CD14-positive monocyte (primary cell): ENCODE measurements at regions of chr18 and their contacts with region 1.

Region 1: DNA sequence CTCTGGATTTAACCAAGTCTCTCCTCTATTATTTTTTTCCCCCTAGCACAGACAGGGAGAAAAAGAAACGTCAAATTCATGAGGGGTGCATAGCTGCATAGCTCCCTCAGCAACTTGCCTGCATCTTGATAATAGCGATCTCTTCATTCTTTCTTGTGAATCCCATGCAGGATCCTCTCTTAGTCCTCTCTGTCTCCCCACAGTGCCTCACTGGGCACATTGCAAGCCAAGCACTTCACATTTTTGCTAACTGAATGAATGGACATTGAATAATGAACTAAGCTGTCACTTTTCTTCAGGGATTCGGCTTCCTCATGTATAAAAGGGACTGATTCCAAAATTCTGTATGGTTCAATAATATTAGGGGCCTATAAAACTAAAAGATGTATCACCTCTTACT is 2.9 kb upstream of the EPB41L3 start:
- DNase-seq: peak; percentile 43 to 58 (median 57)
- H3K4me3 ChIP-seq: no peak overlapping the region
- H3K4me3 Mint-ChIP-seq: peak overlapping the region in 1 of 2 donors; percentile 4
- H3K27ac ChIP-seq: no peak overlapping the region
- H3K27ac Mint-ChIP-seq: no peak overlapping the region
- H3K4me1 ChIP-seq: peaks cover 13 to 18% of the 10 kb centered on the region in 2 donors
- H3K4me1 Mint-ChIP-seq: peaks cover 21% of the 10 kb centered on the region
- H3K27me3 ChIP-seq: peaks cover 0 to 3% of the 10 kb centered on the region in 2 donors
- H3K27me3 Mint-ChIP-seq: peaks cover 13 to 28% (median 22%) of the 10 kb centered on the region in 3 donors
- CTCF ChIP-seq: peak; percentile 50

Region 2: GRCh38 chr18:5424903-5425664 is 121.6 kb before region 1 on chr18:
- intact Hi-C with region 1: loop called in 1 of 2 experiments (anchors 10 kb)
- DNase-seq: peak; percentile 24 to 62 (median 43)
- H3K4me3 ChIP-seq: no peak overlapping the region
- H3K4me3 Mint-ChIP-seq: no peak overlapping the region
- H3K27ac ChIP-seq: no peak overlapping the region
- H3K27ac Mint-ChIP-seq: no peak overlapping the region
- H3K4me1 ChIP-seq: no peaks in the 10 kb centered on the region
- H3K4me1 Mint-ChIP-seq: peaks cover 4% of the 10 kb centered on the region
- H3K27me3 ChIP-seq: no peaks in the 10 kb centered on the region
- H3K27me3 Mint-ChIP-seq: peaks cover 0 to 1% (median 0%) of the 10 kb centered on the region in 3 donors
- CTCF ChIP-seq: peak; percentile 71

Region 3: GRCh38 chr18:5475267-5475666 is 71.4 kb before region 1 on chr18:
- intact Hi-C with region 1: loop called in 1 of 2 experiments (anchors 5 kb)
- DNase-seq: peak; percentile 82 to 93 (median 83)
- H3K4me3 ChIP-seq: peak overlapping the region in 1 of 3 experiments; percentile 38
- H3K4me3 Mint-ChIP-seq: peak overlapping the region in 1 of 2 donors; percentile 41
- H3K27ac ChIP-seq: peak overlapping the region in 1 of 2 donors; percentile 76
- H3K27ac Mint-ChIP-seq: peak overlapping the region; percentile 51 to 85 (median 68)
- H3K4me1 ChIP-seq: peaks cover 15 to 21% of the 10 kb centered on the region in 2 donors
- H3K4me1 Mint-ChIP-seq: peaks cover 27% of the 10 kb centered on the region
- H3K27me3 ChIP-seq: no peaks in the 10 kb centered on the region
- H3K27me3 Mint-ChIP-seq: no peaks in the 10 kb centered on the region
- CTCF ChIP-seq: no peak